ENCODE measurements at regions of chr7 and their contacts with region 1.

Region 1: GRCh38 chr7:65307651-65308299 is 65.9 kb upstream of the ZNF92 start:
- DNase-seq: peak in 3 of 4 donors; percentile 33 to 78 (median 55)
- ATAC-seq: peak; percentile 88
- H3K4me3 ChIP-seq: no peak overlapping the region
- H3K27ac ChIP-seq: no peak overlapping the region
- H3K4me1 ChIP-seq: no peaks in the 10 kb centered on the region
- H3K27me3 ChIP-seq: peaks cover 0 to 13% of the 10 kb centered on the region in 2 donors
- CTCF ChIP-seq: peak; percentile 66 to 73

Region 2: GRCh38 chr7:64951250-64951848 is 356.4 kb before region 1 on chr7:
- intact Hi-C with region 1: loop called in 1 of 2 experiments (anchors 5 kb)
- DNase-seq: peak in 2 of 4 donors; percentile 35 to 54
- ATAC-seq: peak; percentile 91
- H3K4me3 ChIP-seq: no peak overlapping the region
- H3K27ac ChIP-seq: no peak overlapping the region
- H3K4me1 ChIP-seq: peaks cover 4 to 9% of the 10 kb centered on the region in 2 donors
- H3K27me3 ChIP-seq: peaks cover 10 to 34% of the 10 kb centered on the region in 2 donors
- CTCF ChIP-seq: peak; percentile 81

Measured in left lung (tissue), 14 donors.